Activated B cell treated with CpG ODN at 0.5 μM for 24 hours (primary cell): ENCODE measurements at regions of chr1 and their contacts with region 1.

Region 1: DNA sequence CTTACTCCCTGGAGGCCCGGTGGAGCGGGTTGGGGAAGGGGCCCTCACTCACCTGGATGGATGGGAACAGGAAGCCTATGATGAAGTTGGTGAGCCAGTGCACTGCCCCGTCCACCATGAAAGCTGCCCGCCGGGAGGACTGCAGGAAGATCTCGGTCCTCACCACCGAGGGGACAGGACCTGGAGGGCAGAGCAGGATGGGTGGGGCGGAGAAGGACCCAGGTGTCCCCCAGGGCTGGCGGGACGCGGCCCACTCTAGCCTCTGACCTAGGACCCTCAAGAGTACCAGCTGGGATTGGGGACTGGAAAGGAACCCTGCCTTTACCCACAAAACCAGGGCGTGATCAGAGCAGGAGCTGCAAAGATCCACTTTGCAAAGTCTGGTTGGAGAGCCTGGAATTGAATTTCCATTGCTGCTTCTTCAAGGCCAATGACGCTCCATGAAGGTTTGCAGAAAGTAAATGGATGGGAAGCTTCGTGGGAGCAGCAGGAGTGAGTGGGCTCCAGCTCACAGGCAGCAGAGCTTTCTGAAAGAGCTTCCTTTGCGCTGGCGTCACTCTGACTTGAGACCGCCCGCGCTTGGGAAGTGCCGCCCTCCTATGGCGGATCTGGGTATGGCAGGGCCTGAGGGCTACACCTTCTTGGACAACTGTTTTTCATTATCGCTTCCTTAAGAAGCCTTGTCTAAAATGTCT is 21.4 kb downstream of the SLC2A7 start:
- DNase-seq: peak; percentile 74
- ATAC-seq: peak; percentile 75
- H3K4me3 Mint-ChIP-seq: no peak overlapping the region
- H3K27ac Mint-ChIP-seq: no peak overlapping the region
- H3K4me1 Mint-ChIP-seq: peaks cover 34% of the 10 kb centered on the region
- H3K27me3 Mint-ChIP-seq: peaks cover 2% of the 10 kb centered on the region
- CTCF ChIP-seq: peak; percentile 78

Region 2: GRCh38 chr1:8962812-8963530 is 41.9 kb before region 1 on chr1:
- CTCF ChIA-PET with region 1: interaction called, 11 read pairs
- POLR2A ChIA-PET with region 1: no interaction called
- intact Hi-C with region 1: no loop called
- DNase-seq: no peak
- ATAC-seq: peak; percentile 56
- H3K4me3 Mint-ChIP-seq: no peak overlapping the region
- H3K27ac Mint-ChIP-seq: no peak overlapping the region
- H3K4me1 Mint-ChIP-seq: no peaks in the 10 kb centered on the region
- H3K27me3 Mint-ChIP-seq: peaks cover 8% of the 10 kb centered on the region
- CTCF ChIP-seq: no peak

Region 3: GRCh38 chr1:9069326-9070100 is 64.7 kb after region 1 on chr1 and contains the start of gene SLC2A5:
- CTCF ChIA-PET with region 1: interaction called, 5 read pairs
- POLR2A ChIA-PET with region 1: interaction called, 3 read pairs
- intact Hi-C with region 1: loop called (anchors 2 kb)
- DNase-seq: peak; percentile 65
- ATAC-seq: peak; percentile 98
- H3K4me3 Mint-ChIP-seq: peak within 1 kb of the TSS; percentile 83
- H3K27ac Mint-ChIP-seq: peak within 1 kb of the TSS; percentile 64
- H3K4me1 Mint-ChIP-seq: peaks cover 71% of the 10 kb centered on the region
- H3K27me3 Mint-ChIP-seq: no peaks in the 10 kb centered on the region
- CTCF ChIP-seq: no peak
- total RNA-seq, gene SLC2A5: 3.6 and 4.5 TPM in 2 replicates

Region 4: GRCh38 chr1:9101510-9102146 is 96.8 kb after region 1 on chr1:
- CTCF ChIA-PET with region 1: interaction called, 40 read pairs
- POLR2A ChIA-PET with region 1: interaction called, 3 read pairs
- intact Hi-C with region 1: loop called (anchors 1 kb)
- DNase-seq: no peak
- ATAC-seq: peak; percentile 77
- H3K4me3 Mint-ChIP-seq: no peak overlapping the region
- H3K27ac Mint-ChIP-seq: no peak overlapping the region
- H3K4me1 Mint-ChIP-seq: no peaks in the 10 kb centered on the region
- H3K27me3 Mint-ChIP-seq: no peaks in the 10 kb centered on the region
- CTCF ChIP-seq: no peak